CD8-positive, alpha-beta T cell (primary cell): ENCODE measurements at regions of chr4 and their contacts with region 1.

Region 1: GRCh38 chr4:87807402-87807801 is 8.0 kb downstream of the IBSP start:
- DNase-seq: no peak
- ATAC-seq: no peak
- H3K4me3 ChIP-seq: no peak overlapping the region
- H3K4me3 Mint-ChIP-seq: no peak overlapping the region
- H3K27ac ChIP-seq: no peak overlapping the region
- H3K27ac Mint-ChIP-seq: no peak overlapping the region
- H3K4me1 ChIP-seq: no peaks in the 10 kb centered on the region
- H3K4me1 Mint-ChIP-seq: no peaks in the 10 kb centered on the region
- H3K27me3 ChIP-seq: no peaks in the 10 kb centered on the region
- H3K27me3 Mint-ChIP-seq: no peaks in the 10 kb centered on the region
- CTCF ChIP-seq: no peak

Region 2: DNA sequence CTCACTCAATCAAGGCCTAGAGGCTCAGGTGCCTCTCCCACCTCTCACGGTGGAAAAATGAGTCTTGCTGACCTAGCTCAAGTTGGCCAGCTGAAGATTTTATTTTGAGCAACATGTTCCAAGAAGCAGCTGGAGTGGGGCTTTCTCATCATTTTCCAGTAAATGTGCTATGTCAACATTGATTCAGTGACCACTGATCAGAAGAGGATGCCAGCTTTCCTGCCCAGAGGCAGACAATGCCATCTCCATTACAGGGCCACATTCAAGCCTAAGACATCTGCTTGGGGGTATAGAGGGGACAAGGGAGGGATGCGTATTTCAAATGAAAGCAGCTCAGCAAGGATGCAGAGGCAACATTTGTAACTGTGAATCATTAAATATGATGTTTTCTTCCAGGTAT is 28.3 kb after region 1 on chr4:
- CTCF ChIA-PET with region 1: no interaction called
- POLR2A ChIA-PET with region 1: no interaction called
- intact Hi-C with region 1: loop called in 1 of 2 experiments (anchors 1 kb)
- DNase-seq: no peak
- ATAC-seq: no peak
- H3K4me3 ChIP-seq: no peak overlapping the region
- H3K4me3 Mint-ChIP-seq: no peak overlapping the region
- H3K27ac ChIP-seq: no peak overlapping the region
- H3K27ac Mint-ChIP-seq: no peak overlapping the region
- H3K4me1 ChIP-seq: no peaks in the 10 kb centered on the region
- H3K4me1 Mint-ChIP-seq: no peaks in the 10 kb centered on the region
- H3K27me3 ChIP-seq: no peaks in the 10 kb centered on the region
- H3K27me3 Mint-ChIP-seq: peaks cover 2% of the 10 kb centered on the region
- CTCF ChIP-seq: no peak